Right lobe of liver (tissue), 6 donors: ENCODE measurements at regions of chr12 and their contacts with region 1.

Region 1: GRCh38 chr12:50066433-50066832 is 9.0 kb downstream of the ASIC1 start:
- DNase-seq: peak in 1 of 3 donors; percentile 31
- ATAC-seq: peak; percentile 9 to 45 (median 28)
- H3K4me3 ChIP-seq: no peak overlapping the region
- H3K27ac ChIP-seq: no peak overlapping the region
- H3K4me1 ChIP-seq: no peaks in the 10 kb centered on the region
- H3K27me3 ChIP-seq: no peaks in the 10 kb centered on the region
- CTCF ChIP-seq: no peak
- POLR2A ChIP-seq: no peak

Region 2: GRCh38 chr12:49872781-49873181 is 193.7 kb before region 1 on chr12:
- intact Hi-C with region 1: loop called in 1 of 2 experiments (anchors 10 kb)
- DNase-seq: no peak
- ATAC-seq: no peak
- H3K4me3 ChIP-seq: no peak overlapping the region
- H3K27ac ChIP-seq: no peak overlapping the region
- H3K4me1 ChIP-seq: no peaks in the 10 kb centered on the region
- H3K27me3 ChIP-seq: no peaks in the 10 kb centered on the region
- CTCF ChIP-seq: no peak
- POLR2A ChIP-seq: no peak